Astrocyte of the cerebellum (primary cell): ENCODE measurements at regions of chr4 and their contacts with region 1.

Region 1: DNA sequence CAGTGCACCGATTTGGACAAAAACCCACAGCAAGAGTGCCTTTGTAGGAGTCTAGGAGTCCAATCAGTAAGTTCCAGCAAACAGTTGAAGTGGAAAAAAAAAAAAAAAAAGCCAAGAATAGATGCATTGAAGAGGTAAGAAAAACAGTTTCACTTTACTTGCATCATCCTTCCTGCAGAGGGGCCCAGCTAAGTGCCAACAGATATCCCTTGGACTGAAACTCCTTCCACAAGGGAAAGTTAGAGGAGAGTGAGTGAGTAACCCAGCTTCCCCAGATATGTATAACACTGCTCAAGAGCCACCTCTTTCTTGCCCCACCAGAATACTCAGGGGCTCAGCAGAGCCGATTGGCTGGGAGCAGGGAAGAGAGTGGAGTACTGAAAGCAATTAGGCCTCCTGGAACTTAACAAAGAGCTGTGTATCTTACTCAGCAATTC is 617.7 kb upstream of the SMIM31 start:
- DNase-seq: peak; percentile 46
- H3K4me3 ChIP-seq: no peak overlapping the region
- CTCF ChIP-seq: no peak

Region 2: GRCh38 chr4:164070625-164071024 is 65.6 kb before region 1 on chr4:
- in situ Hi-C with region 1: loop called (anchors 10 kb)
- DNase-seq: no peak
- H3K4me3 ChIP-seq: no peak overlapping the region
- CTCF ChIP-seq: no peak

Region 3: GRCh38 chr4:164192844-164193243 is 56.6 kb after region 1 on chr4:
- in situ Hi-C with region 1: no loop called
- DNase-seq: no peak
- H3K4me3 ChIP-seq: no peak overlapping the region
- CTCF ChIP-seq: no peak